Posterior cingulate gyrus (tissue), 11 donors: ENCODE measurements at regions of chrX and their contacts with region 1.

Region 1: DNA sequence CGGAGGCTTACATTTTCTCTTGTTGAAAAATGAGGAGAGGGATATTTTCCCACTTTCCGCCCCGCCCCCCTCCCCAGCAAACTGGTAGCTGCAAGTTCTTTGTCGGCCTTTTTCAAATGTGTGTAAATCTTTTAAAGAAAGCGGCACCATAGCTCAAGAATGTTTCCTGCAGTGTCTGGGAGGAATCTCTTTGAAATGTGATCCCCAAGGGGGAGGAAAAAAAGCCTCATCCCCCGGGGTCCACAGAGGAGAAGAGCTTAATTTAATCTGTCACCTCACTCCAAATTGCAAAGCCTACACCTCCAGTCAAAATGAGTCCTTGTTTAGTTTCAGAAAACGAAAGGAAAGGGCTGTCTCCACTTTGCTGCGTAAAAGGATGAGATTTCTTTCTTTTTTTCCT is 34.8 kb downstream of the ASMT start:
- DNase-seq: no peak

Region 2: DNA sequence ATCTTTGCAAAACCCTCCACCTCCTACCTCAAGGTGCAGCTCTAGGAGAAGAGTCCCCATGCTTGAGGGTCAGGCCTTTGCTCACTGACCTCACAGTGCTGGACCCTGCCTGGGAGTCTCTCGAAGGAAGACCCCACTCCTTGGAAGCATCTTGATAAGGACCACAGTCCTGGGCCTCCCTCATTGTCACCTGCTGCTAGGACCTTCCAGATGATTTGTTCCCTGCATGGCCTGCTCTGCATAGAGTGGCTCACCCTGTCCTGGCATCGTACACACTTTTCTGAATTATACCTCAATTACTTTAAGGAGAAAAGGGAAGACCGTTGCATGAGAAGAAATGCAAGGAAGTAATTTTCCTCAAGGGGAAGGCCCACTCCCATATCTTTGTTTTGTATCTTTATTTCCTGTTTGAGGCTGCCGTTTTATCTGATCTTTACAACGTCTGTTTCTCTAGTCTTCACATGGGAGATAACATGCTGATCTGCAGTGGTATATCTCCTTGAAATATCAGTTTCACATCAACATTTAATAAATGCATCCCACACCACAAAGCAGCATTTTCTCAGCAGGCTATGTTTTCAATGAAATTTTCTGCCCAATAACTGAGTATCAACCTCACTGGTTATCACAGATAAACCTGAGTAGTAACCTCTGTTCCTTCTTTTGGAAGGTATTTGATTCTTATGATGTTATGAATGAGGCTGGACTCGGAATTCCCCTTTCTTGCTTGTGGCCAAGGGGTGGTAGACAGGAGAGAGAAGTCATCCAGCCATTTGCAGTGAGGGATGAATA is 73.2 kb before region 1 on chrX:
- intact Hi-C with region 1: no loop called
- DNase-seq: peak in 2 of 10 donors; percentile 3 to 45

Region 3: GRCh38 chrX:2595258-2595657 is 945.6 kb after region 1 on chrX:
- intact Hi-C with region 1: loop called (anchors 1 kb)
- DNase-seq: peak in 1 of 10 donors; percentile 2